Activated CD4-positive, alpha-beta memory T cell treated with anti-CD3 and anti-CD28 coated beads for 36 hours (primary cell): ENCODE measurements at regions of chr3 and their contacts with region 1.

Region 1: GRCh38 chr3:5298453-5298852 is 110.9 kb downstream of the EDEM1 start:
- DNase-seq: no peak
- H3K4me3 Mint-ChIP-seq: no peak overlapping the region
- H3K27ac Mint-ChIP-seq: no peak overlapping the region
- H3K4me1 Mint-ChIP-seq: peaks cover 5% of the 10 kb centered on the region
- H3K27me3 Mint-ChIP-seq: peaks cover 2% of the 10 kb centered on the region

Region 2: GRCh38 chr3:5312290-5312689 is 13.8 kb after region 1 on chr3:
- CTCF ChIA-PET with region 1: no interaction called
- POLR2A ChIA-PET with region 1: no interaction called
- intact Hi-C with region 1: loop called (anchors 1 kb)
- DNase-seq: peak; percentile 18
- H3K4me3 Mint-ChIP-seq: no peak overlapping the region
- H3K27ac Mint-ChIP-seq: peak overlapping the region; percentile 7
- H3K4me1 Mint-ChIP-seq: peaks cover 9% of the 10 kb centered on the region
- H3K27me3 Mint-ChIP-seq: no peaks in the 10 kb centered on the region

Region 3: DNA sequence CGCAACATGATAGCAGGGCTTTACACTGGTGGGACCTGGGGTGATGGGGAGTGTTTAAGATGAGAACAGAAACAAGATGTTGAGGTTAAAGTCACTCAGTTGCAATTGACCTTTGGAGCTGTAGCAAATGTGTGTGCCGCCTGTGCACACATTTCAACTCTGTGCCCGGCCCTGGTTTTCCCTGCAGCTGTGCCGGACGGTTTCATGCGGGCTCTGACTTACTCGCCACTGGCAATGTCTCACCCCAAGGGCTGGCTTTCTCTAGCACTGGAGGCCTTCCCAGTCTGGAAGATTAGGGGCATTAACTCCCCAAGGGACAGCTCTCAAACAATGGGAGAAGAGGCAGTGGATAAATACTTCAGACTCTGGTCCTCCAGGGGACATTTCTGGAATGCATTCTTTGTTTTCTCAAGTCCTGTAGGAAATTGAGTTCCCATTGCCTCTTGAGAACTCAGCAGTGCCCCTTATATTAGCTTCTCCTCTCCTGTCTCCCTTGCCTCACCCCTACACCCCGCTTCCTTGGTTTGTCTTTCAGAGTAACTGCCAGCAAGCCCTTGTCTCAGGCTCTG is 41.6 kb after region 1 on chr3:
- CTCF ChIA-PET with region 1: no interaction called
- POLR2A ChIA-PET with region 1: no interaction called
- intact Hi-C with region 1: no loop called
- DNase-seq: no peak
- H3K4me3 Mint-ChIP-seq: no peak overlapping the region
- H3K27ac Mint-ChIP-seq: no peak overlapping the region
- H3K4me1 Mint-ChIP-seq: no peaks in the 10 kb centered on the region
- H3K27me3 Mint-ChIP-seq: no peaks in the 10 kb centered on the region

Region 4: GRCh38 chr3:5463991-5464390 is 165.5 kb after region 1 on chr3:
- CTCF ChIA-PET with region 1: no interaction called
- POLR2A ChIA-PET with region 1: no interaction called
- intact Hi-C with region 1: no loop called
- DNase-seq: no peak
- H3K4me3 Mint-ChIP-seq: no peak overlapping the region
- H3K27ac Mint-ChIP-seq: no peak overlapping the region
- H3K4me1 Mint-ChIP-seq: no peaks in the 10 kb centered on the region
- H3K27me3 Mint-ChIP-seq: peaks cover 6% of the 10 kb centered on the region